GM12878 (cell line): ENCODE measurements at regions of chr5 and their contacts with region 1.

Region 1: GRCh38 chr5:107513337-107514085 is 157.2 kb downstream of the EFNA5 start:
- DNase-seq: peak; percentile 39
- ATAC-seq: peak; percentile 44
- H3K4me3 ChIP-seq: 0 out of 2 replicates have a peak overlapping the region, but pooled peaks have one; percentile 11
- H3K27ac ChIP-seq: peak overlapping the region; percentile 49
- H3K4me1 ChIP-seq: peaks cover 10% of the 10 kb centered on the region
- H3K27me3 ChIP-seq: no peaks in the 10 kb centered on the region
- CTCF ChIP-seq: no peak
- EP300 ChIP-seq: no peak
- POLR2A ChIP-seq: no peak
- RAD21 ChIP-seq: no peak

Region 2: DNA sequence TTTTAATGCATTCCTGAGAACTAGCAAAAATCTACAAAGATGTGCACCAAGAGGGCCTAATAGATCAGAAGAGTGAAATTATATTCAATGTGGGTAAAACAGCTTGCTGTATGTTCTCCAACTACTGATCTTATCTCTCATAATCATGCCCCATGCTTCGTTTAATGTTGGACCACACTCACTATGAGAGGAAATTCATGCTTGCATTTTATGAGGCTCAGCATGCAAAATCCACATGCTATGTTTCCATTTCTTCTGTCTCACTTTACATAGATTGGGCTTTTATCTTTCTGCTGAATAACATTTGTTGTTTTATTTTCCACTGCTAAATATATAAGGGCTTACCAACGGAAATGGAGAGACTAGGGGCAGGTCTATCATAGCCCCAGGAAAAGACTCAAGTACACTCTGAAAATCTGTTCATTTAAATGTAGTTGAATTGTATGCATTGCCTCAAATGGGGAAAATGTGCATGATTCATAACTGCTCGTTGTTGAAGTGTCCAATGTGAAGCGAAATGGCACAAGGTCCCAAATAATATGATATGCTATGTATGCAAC is 316.9 kb before region 1 on chr5:
- CTCF ChIA-PET with region 1: no interaction called
- POLR2A ChIA-PET with region 1: no interaction called
- RAD21 ChIA-PET with region 1: no interaction called
- SMC1A ChIA-PET with region 1: no interaction called
- in situ Hi-C with region 1: no loop called
- intact Hi-C with region 1: no loop called
- DNase-seq: no peak
- ATAC-seq: no peak
- H3K4me3 ChIP-seq: no peak overlapping the region
- H3K27ac ChIP-seq: no peak overlapping the region
- H3K4me1 ChIP-seq: no peaks in the 10 kb centered on the region
- H3K27me3 ChIP-seq: no peaks in the 10 kb centered on the region
- CTCF ChIP-seq: no peak
- EP300 ChIP-seq: no peak
- POLR2A ChIP-seq: no peak
- RAD21 ChIP-seq: no peak

Region 3: DNA sequence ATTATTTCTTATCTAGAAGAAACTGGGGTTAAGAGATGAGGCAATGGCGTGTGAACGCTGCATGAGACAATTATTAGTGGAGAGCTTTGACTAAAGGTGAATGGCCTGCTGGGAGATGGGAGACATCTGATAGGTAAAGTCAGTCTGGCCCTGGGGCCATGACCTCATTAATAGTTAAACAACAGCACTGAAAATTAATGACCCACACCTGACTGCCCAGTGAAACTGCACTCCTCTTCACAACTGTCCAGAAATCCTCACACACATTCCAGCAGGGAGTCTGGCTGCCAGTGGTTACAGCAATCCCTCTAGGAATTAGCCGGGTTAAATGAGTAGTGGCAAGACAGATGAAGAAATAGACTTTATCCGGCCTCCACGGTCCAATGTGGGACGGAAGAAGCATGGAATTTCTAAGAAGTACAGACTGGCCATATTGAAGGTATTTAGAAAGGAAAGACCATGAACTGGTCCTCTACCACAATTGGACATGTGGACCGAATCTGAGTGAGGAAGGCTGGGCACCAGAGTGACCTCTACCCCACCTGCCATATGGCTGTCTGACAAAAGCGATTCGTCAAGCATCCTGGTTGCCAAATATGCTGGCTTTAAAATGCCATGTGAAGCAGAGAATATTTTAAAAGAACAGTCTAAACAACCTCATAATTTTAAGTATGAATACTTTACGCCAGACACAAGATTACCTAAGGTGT is 18.8 kb after region 1 on chr5:
- CTCF ChIA-PET with region 1: no interaction called
- POLR2A ChIA-PET with region 1: no interaction called
- RAD21 ChIA-PET with region 1: no interaction called
- SMC1A ChIA-PET with region 1: interaction called, 18 read pairs
- in situ Hi-C with region 1: no loop called
- intact Hi-C with region 1: no loop called
- DNase-seq: no peak
- ATAC-seq: no peak
- H3K4me3 ChIP-seq: no peak overlapping the region
- H3K27ac ChIP-seq: no peak overlapping the region
- H3K4me1 ChIP-seq: no peaks in the 10 kb centered on the region
- H3K27me3 ChIP-seq: no peaks in the 10 kb centered on the region
- CTCF ChIP-seq: no peak
- EP300 ChIP-seq: no peak
- POLR2A ChIP-seq: no peak
- RAD21 ChIP-seq: no peak

Region 4: GRCh38 chr5:107855171-107855570 is 341.7 kb after region 1 on chr5:
- CTCF ChIA-PET with region 1: no interaction called
- POLR2A ChIA-PET with region 1: no interaction called
- RAD21 ChIA-PET with region 1: no interaction called
- SMC1A ChIA-PET with region 1: no interaction called
- in situ Hi-C with region 1: no loop called
- intact Hi-C with region 1: no loop called
- DNase-seq: no peak
- ATAC-seq: no peak
- H3K4me3 ChIP-seq: no peak overlapping the region
- H3K27ac ChIP-seq: no peak overlapping the region
- H3K4me1 ChIP-seq: no peaks in the 10 kb centered on the region
- H3K27me3 ChIP-seq: no peaks in the 10 kb centered on the region
- CTCF ChIP-seq: peak in 1 of 3 experiments; percentile 22; a peak in 1 of 6 replicates
- EP300 ChIP-seq: no peak
- POLR2A ChIP-seq: no peak
- RAD21 ChIP-seq: no peak

Region 5: GRCh38 chr5:108249095-108249784 is 735.7 kb after region 1 on chr5:
- CTCF ChIA-PET with region 1: no interaction called
- POLR2A ChIA-PET with region 1: no interaction called
- RAD21 ChIA-PET with region 1: no interaction called
- SMC1A ChIA-PET with region 1: no interaction called
- in situ Hi-C with region 1: no loop called
- intact Hi-C with region 1: no loop called
- DNase-seq: no peak
- ATAC-seq: no peak
- H3K4me3 ChIP-seq: no peak overlapping the region
- H3K27ac ChIP-seq: no peak overlapping the region
- H3K4me1 ChIP-seq: no peaks in the 10 kb centered on the region
- H3K27me3 ChIP-seq: no peaks in the 10 kb centered on the region
- CTCF ChIP-seq: no peak
- EP300 ChIP-seq: no peak
- POLR2A ChIP-seq: no peak
- RAD21 ChIP-seq: no peak